ENCODE measurements at regions of chr11 and their contacts with region 1.

Region 1: GRCh38 chr11:60292145-60292544 is 11.7 kb downstream of the MS4A4A start:
- DNase-seq: no peak
- H3K4me3 ChIP-seq: no peak overlapping the region
- H3K27ac ChIP-seq: no peak overlapping the region
- H3K4me1 ChIP-seq: no peaks in the 10 kb centered on the region
- H3K27me3 ChIP-seq: no peaks in the 10 kb centered on the region
- CTCF ChIP-seq: no peak
- POLR2A ChIP-seq: no peak

Region 2: DNA sequence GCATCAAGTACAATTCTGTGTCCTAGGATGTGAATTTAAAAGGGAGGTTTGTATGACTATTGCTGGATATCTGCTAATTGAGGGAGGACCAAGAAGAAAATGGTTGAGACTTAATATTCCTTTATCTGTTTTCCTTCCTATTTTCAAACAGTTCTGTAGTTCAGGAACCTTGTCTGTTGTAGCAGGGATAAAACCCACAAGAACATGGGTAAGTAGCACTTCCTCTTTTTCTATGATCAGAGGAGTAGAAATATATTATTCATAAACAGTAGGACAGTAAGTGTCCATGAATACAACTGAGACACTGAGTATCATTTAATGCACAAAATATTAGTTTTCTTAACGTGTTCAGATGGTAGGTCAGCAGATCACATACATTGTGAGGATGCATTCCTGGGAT is 228.0 kb before region 1 on chr11:
- intact Hi-C with region 1: no loop called
- DNase-seq: no peak
- H3K4me3 ChIP-seq: no peak overlapping the region
- H3K27ac ChIP-seq: no peak overlapping the region
- H3K4me1 ChIP-seq: no peaks in the 10 kb centered on the region
- H3K27me3 ChIP-seq: no peaks in the 10 kb centered on the region
- CTCF ChIP-seq: no peak
- POLR2A ChIP-seq: no peak

Region 3: DNA sequence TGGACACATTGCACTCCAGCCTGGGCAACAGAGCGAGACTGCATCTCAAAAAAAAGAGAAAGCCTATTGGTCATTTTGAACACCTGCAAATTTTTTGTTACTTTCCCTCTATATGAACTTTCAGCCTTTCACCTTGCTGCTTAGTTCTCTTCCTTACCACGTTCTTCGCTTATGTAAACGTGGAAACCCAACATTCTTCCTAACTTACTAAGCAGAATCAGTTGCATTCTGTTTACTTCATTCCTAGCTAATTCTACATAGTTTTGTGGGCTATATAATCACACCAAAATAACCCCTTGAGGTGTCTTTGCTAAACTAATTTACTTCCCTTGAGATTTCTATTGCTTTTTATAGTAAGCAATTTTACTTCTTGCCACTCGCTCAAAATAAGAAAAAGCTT is 11.5 kb after region 1 on chr11:
- intact Hi-C with region 1: loop called (anchors 1 kb)
- DNase-seq: no peak
- H3K4me3 ChIP-seq: no peak overlapping the region
- H3K27ac ChIP-seq: no peak overlapping the region
- H3K4me1 ChIP-seq: no peaks in the 10 kb centered on the region
- H3K27me3 ChIP-seq: no peaks in the 10 kb centered on the region
- CTCF ChIP-seq: no peak
- POLR2A ChIP-seq: no peak

Region 4: GRCh38 chr11:60334005-60334620 is 42.0 kb after region 1 on chr11:
- intact Hi-C with region 1: no loop called
- DNase-seq: no peak
- H3K4me3 ChIP-seq: no peak overlapping the region
- H3K27ac ChIP-seq: no peak overlapping the region
- H3K4me1 ChIP-seq: no peaks in the 10 kb centered on the region
- H3K27me3 ChIP-seq: no peaks in the 10 kb centered on the region
- CTCF ChIP-seq: peak in 2 of 3 donors; percentile 28 to 54
- POLR2A ChIP-seq: no peak

Measured in breast epithelium (tissue), 4 donors.